ENCODE measurements at regions of chr19 and their contacts with region 1.

Region 1: GRCh38 chr19:4909897-4910593 is 744 bp downstream of the UHRF1 start:
- DNase-seq: peak; percentile 93 to 98 (median 96)
- ATAC-seq: peak; percentile 94 to 97
- H3K4me3 ChIP-seq: peak overlapping the region; percentile 98
- H3K27ac ChIP-seq: no peak overlapping the region
- H3K4me1 ChIP-seq: no peaks in the 10 kb centered on the region
- H3K27me3 ChIP-seq: no peaks in the 10 kb centered on the region

Region 2: GRCh38 chr19:4803736-4804695 is 106.0 kb before region 1 on chr19:
- intact Hi-C with region 1: loop called in 2 of 4 experiments (anchors 2 to 5 kb)
- DNase-seq: peak; percentile 61 to 87 (median 82)
- ATAC-seq: peak; percentile 72
- H3K4me3 ChIP-seq: no peak overlapping the region
- H3K27ac ChIP-seq: no peak overlapping the region
- H3K4me1 ChIP-seq: no peaks in the 10 kb centered on the region
- H3K27me3 ChIP-seq: no peaks in the 10 kb centered on the region

Region 3: GRCh38 chr19:4815426-4816201 is 94.4 kb before region 1 on chr19:
- intact Hi-C with region 1: loop called in 1 of 4 experiments (anchors 10 kb)
- DNase-seq: peak; percentile 92 to 94 (median 92)
- ATAC-seq: peak; percentile 93 to 95
- H3K4me3 ChIP-seq: no peak overlapping the region
- H3K27ac ChIP-seq: no peak overlapping the region
- H3K4me1 ChIP-seq: no peaks in the 10 kb centered on the region
- H3K27me3 ChIP-seq: no peaks in the 10 kb centered on the region

Region 4: GRCh38 chr19:4867534-4868285 is 42.3 kb before region 1 on chr19 and contains the start of gene PLIN3:
- intact Hi-C with region 1: loop called in 2 of 4 experiments (anchors 5 kb)
- DNase-seq: peak; percentile 98 to 99 (median 99)
- ATAC-seq: peak; percentile 98
- H3K4me3 ChIP-seq: peak within 1 kb of the TSS; percentile 79
- H3K27ac ChIP-seq: peak within 1 kb of the TSS; percentile 27
- H3K4me1 ChIP-seq: peaks cover 4% of the 10 kb centered on the region
- H3K27me3 ChIP-seq: no peaks in the 10 kb centered on the region
- total RNA-seq, gene PLIN3: 26.5 to 32.2 (median 28.5) TPM

Region 5: GRCh38 chr19:4877753-4878490 is 32.1 kb before region 1 on chr19:
- intact Hi-C with region 1: loop called in 3 of 4 experiments (anchors 5 kb)
- DNase-seq: peak; percentile 31 to 72 (median 62)
- ATAC-seq: peak; percentile 76 to 87
- H3K4me3 ChIP-seq: no peak overlapping the region
- H3K27ac ChIP-seq: peak overlapping the region; percentile 30
- H3K4me1 ChIP-seq: no peaks in the 10 kb centered on the region
- H3K27me3 ChIP-seq: no peaks in the 10 kb centered on the region

Region 6: GRCh38 chr19:4957981-4958380 is 47.9 kb after region 1 on chr19:
- intact Hi-C with region 1: no loop called
- DNase-seq: peak in 2 of 3 donors; percentile 19 to 24
- ATAC-seq: no peak
- H3K4me3 ChIP-seq: no peak overlapping the region
- H3K27ac ChIP-seq: no peak overlapping the region
- H3K4me1 ChIP-seq: no peaks in the 10 kb centered on the region
- H3K27me3 ChIP-seq: no peaks in the 10 kb centered on the region

Region 7: DNA sequence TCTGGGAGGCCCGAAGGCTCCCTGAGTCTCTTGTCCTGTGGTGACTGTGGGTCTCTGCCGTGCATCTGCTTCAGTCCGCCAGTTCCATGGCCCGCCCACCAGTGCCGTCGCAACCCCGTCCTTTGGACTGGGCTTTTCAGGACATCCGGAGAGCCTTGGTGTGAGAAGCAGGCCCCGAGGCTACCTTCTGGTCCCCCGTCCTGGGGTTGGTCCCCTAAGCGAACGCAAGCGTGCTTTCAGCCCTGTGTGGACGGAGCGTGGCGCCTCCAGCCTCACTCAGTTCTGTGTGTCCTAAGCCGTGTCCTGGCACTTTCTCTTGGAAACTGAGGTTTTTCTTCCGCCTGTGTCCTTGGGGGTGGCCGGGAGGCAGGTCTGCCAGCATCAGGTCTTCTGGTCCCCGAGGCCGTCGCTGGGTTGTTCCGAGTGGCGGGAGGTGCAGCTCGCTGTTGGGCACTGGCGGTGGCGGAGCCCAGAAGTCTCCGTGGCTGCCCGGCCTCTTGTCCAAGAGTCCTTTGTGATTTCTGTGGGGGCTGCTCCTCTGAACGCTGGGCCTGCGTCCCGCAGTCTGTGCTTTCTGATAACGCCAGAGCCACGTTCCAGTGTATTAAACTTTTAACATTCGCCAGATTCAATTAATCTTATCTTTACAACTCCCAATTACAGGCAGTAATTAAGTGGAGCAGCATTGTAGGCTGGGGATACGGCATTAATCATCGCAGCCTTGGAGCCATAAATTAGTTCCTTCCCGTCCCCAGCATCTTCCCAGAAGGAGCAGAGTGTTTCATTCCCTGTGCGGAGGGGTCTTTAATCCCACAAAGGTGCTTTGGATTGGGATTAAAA is 158.4 kb after region 1 on chr19:
- intact Hi-C with region 1: no loop called
- DNase-seq: peak in 1 of 3 donors; percentile 74
- ATAC-seq: no peak
- H3K4me3 ChIP-seq: no peak overlapping the region
- H3K27ac ChIP-seq: no peak overlapping the region
- H3K4me1 ChIP-seq: peaks cover 3% of the 10 kb centered on the region
- H3K27me3 ChIP-seq: no peaks in the 10 kb centered on the region